ENCODE measurements at regions of chr7 and their contacts with region 1.

Region 1: DNA sequence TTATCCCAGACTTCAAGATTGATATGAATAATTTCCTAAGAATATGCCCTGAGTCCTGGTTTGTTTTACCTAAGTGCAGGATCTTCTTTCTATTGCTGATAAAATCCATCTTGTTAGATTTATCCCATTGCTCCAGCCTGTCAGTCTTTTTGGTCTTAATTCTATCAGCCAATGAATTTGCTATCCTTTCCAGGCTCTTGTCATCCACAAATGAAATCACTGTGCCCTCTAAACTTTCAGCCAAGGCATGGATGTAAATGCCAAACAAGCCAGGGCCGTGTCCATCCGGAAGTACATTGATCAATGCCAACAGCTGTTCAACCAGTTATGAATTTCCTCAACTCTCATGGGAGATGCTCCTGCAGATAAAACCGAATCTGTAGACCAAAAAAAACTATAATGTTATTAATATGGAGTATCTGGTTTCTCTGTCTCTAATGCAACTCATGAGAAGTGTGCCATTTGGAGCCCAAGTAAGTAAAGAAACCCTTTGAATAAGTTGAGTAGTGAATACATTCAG is 40.0 kb downstream of the NPY start:
- DNase-seq: no peak
- H3K4me3 ChIP-seq: no peak overlapping the region
- H3K27ac ChIP-seq: no peak overlapping the region
- H3K4me1 ChIP-seq: no peaks in the 10 kb centered on the region
- H3K27me3 ChIP-seq: no peaks in the 10 kb centered on the region
- CTCF ChIP-seq: no peak
- EP300 ChIP-seq: no peak
- POLR2A ChIP-seq: no peak

Region 2: GRCh38 chr7:24271938-24272337 is 52.1 kb before region 1 on chr7:
- in situ Hi-C with region 1: no loop called
- intact Hi-C with region 1: no loop called
- DNase-seq: no peak
- H3K4me3 ChIP-seq: no peak overlapping the region
- H3K27ac ChIP-seq: no peak overlapping the region
- H3K4me1 ChIP-seq: no peaks in the 10 kb centered on the region
- H3K27me3 ChIP-seq: no peaks in the 10 kb centered on the region
- CTCF ChIP-seq: no peak
- EP300 ChIP-seq: no peak
- POLR2A ChIP-seq: no peak

Region 3: DNA sequence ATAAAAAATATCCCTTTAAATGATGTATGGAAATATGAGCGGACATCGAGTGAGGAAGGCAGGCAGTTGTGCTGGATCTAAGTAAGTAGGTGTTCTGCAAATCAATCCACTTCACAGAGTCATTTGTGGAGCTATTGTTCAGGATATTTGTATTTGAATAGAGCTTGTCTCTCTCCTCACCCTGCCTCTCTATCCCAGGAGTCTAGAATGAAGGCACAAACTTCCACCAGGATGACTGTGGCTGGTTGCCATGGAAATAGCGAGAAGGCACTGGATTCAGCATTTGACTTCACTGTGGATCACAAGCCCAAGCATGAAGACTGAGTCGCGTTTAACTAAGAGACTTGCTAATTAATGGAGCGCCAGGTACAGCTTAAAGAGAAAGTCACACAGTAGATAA is 13.2 kb after region 1 on chr7:
- in situ Hi-C with region 1: no loop called
- intact Hi-C with region 1: loop called (anchors 1 kb)
- DNase-seq: no peak
- H3K4me3 ChIP-seq: no peak overlapping the region
- H3K27ac ChIP-seq: no peak overlapping the region
- H3K4me1 ChIP-seq: no peaks in the 10 kb centered on the region
- H3K27me3 ChIP-seq: peaks cover 3% of the 10 kb centered on the region
- CTCF ChIP-seq: no peak
- EP300 ChIP-seq: no peak
- POLR2A ChIP-seq: no peak

Region 4: DNA sequence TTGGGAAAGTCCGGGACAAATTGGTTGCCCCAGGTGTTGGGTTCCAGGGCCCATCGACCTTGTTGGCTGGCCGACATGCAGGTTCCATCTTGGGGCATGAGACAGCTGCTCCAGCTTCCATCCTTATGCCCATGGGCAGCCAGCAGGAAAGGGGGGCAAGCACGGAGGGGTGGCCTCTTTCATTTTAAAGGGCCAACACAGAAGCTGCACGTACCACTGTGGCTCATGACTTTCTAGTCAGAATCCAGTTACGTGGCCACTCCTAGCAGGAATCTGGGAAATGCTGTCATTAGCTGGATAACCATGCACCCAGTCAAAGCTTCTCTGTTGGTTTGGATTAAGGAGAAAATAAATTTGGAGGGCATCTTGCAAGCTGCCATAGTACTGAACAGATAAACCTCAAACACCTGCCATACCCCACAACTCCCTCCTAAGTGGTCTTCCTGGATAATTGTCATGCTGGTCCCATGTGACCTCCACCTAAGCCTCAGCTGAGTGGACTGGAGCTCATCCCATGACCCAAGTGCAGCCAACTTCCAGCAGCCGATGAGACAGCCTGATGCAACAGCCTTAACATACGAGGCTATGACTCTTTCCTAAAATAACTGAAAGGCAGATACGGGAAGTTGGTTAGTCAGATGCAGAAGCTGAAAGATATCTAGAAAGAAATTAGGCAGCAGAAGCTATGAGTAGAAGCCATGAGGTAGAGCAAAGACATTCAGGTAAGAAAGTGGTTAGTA is 454.7 kb after region 1 on chr7:
- in situ Hi-C with region 1: no loop called
- intact Hi-C with region 1: no loop called
- DNase-seq: no peak
- H3K4me3 ChIP-seq: no peak overlapping the region
- H3K27ac ChIP-seq: no peak overlapping the region
- H3K4me1 ChIP-seq: no peaks in the 10 kb centered on the region
- H3K27me3 ChIP-seq: no peaks in the 10 kb centered on the region
- CTCF ChIP-seq: no peak
- EP300 ChIP-seq: no peak
- POLR2A ChIP-seq: no peak

Measured in transverse colon (tissue), 4 donors.